B cell (primary cell): ENCODE measurements at regions of chr1 and their contacts with region 1.

Region 1: DNA sequence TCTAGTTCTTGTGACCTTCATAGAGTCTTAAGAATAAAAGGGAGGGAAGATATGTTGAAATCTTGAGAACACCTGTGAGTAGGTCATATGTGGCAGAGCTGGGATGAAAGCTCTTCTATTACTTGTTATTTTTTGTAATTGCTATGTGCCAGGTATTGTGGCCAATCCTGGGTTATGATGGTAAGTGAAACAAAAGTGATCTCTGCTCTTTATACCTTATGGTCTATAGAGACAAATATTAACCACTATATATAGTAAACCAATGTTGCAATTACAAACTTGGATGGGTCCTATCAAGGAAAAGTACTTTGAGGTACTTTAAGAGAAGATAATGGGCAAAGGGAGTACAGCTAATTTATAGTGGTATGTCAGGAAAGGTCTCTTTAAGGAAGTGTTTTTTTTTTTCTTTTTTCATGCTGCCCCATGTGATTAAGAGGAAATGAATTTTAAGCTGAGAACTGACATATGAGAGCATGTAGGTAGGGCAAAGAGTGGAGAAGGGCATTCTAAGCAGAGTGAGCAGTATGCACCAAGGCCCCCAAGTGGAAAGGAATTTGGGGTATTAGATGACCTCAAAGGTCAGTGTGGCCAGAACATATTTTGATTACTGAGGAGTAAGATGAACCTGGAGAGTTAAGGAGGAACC is 43.3 kb downstream of the POU2F1 start:
- DNase-seq: peak; percentile 56
- ATAC-seq: peak; percentile 67
- H3K4me3 ChIP-seq: no peak overlapping the region
- H3K4me3 Mint-ChIP-seq: no peak overlapping the region
- H3K27ac ChIP-seq: peak overlapping the region in 1 of 2 donors; percentile 29
- H3K27ac Mint-ChIP-seq: no peak overlapping the region
- H3K4me1 ChIP-seq: peaks cover 37% of the 10 kb centered on the region in 2 donors
- H3K4me1 Mint-ChIP-seq: peaks cover 25% of the 10 kb centered on the region
- H3K27me3 ChIP-seq: no peaks in the 10 kb centered on the region
- H3K27me3 Mint-ChIP-seq: no peaks in the 10 kb centered on the region
- CTCF ChIP-seq: no peak

Region 2: GRCh38 chr1:166489670-166490436 is 774.1 kb before region 1 on chr1:
- CTCF ChIA-PET with region 1: no interaction called
- POLR2A ChIA-PET with region 1: no interaction called
- intact Hi-C with region 1: no loop called
- DNase-seq: peak; percentile 76
- ATAC-seq: peak; percentile 81
- H3K4me3 ChIP-seq: peak overlapping the region; percentile 57 to 96 (median 83)
- H3K4me3 Mint-ChIP-seq: no peak overlapping the region
- H3K27ac ChIP-seq: peak overlapping the region; percentile 90 to 95
- H3K27ac Mint-ChIP-seq: no peak overlapping the region
- H3K4me1 ChIP-seq: peaks cover 14 to 19% of the 10 kb centered on the region in 2 donors
- H3K4me1 Mint-ChIP-seq: peaks cover 5% of the 10 kb centered on the region
- H3K27me3 ChIP-seq: no peaks in the 10 kb centered on the region
- H3K27me3 Mint-ChIP-seq: no peaks in the 10 kb centered on the region
- CTCF ChIP-seq: no peak

Region 3: GRCh38 chr1:166910396-166910994 is 353.4 kb before region 1 on chr1:
- CTCF ChIA-PET with region 1: interaction called, 11 read pairs
- POLR2A ChIA-PET with region 1: no interaction called
- intact Hi-C with region 1: no loop called
- DNase-seq: peak; percentile 87
- ATAC-seq: peak; percentile 97
- H3K4me3 ChIP-seq: no peak overlapping the region
- H3K4me3 Mint-ChIP-seq: no peak overlapping the region
- H3K27ac ChIP-seq: no peak overlapping the region
- H3K27ac Mint-ChIP-seq: no peak overlapping the region
- H3K4me1 ChIP-seq: peaks cover 6 to 8% of the 10 kb centered on the region in 2 donors
- H3K4me1 Mint-ChIP-seq: peaks cover 6% of the 10 kb centered on the region
- H3K27me3 ChIP-seq: no peaks in the 10 kb centered on the region
- H3K27me3 Mint-ChIP-seq: no peaks in the 10 kb centered on the region
- CTCF ChIP-seq: peak; percentile 96

Region 4: DNA sequence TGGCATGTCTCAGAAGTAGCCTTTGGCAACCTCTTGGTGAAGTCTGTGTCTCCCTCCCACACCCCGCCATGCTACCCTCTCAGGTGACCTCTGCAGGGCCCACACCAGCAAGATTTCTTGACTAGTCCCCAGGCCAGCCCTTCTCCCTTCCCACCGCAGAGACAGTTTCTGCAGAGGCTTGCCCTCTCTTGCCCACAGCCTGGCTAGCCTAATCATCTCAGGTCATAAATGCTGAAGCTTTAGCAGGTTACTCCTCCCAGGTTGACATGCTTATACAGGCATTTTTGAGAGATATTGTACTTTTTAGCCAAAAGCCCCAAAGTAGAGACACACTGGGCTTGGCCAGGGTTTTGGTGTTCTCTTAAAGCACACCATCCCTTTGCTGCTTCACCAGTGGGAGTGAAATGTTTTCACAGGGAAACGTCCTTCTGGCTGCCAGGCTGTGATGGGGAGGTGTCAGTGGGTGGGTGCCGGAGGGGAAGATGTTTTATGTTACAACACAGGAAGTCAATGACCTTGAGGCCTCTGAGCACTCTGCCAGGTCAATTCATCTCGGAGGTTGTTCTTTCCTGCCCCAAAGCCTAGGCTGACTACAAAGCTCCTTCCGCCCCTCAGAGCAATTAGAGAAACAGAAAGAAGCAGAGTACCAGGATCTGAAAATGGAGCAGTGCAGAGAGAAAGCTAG is 111.6 kb before region 1 on chr1:
- CTCF ChIA-PET with region 1: no interaction called
- POLR2A ChIA-PET with region 1: no interaction called
- intact Hi-C with region 1: no loop called
- DNase-seq: no peak
- ATAC-seq: no peak
- H3K4me3 ChIP-seq: no peak overlapping the region
- H3K4me3 Mint-ChIP-seq: no peak overlapping the region
- H3K27ac ChIP-seq: no peak overlapping the region
- H3K27ac Mint-ChIP-seq: no peak overlapping the region
- H3K4me1 ChIP-seq: no peaks in the 10 kb centered on the region
- H3K4me1 Mint-ChIP-seq: no peaks in the 10 kb centered on the region
- H3K27me3 ChIP-seq: peaks cover 0 to 14% (median 6%) of the 10 kb centered on the region in 4 experiments
- H3K27me3 Mint-ChIP-seq: peaks cover 31% of the 10 kb centered on the region
- CTCF ChIP-seq: no peak

Region 5: GRCh38 chr1:167196166-167196565 is 67.8 kb before region 1 on chr1:
- CTCF ChIA-PET with region 1: no interaction called
- POLR2A ChIA-PET with region 1: no interaction called
- intact Hi-C with region 1: no loop called
- DNase-seq: no peak
- ATAC-seq: no peak
- H3K4me3 ChIP-seq: no peak overlapping the region
- H3K4me3 Mint-ChIP-seq: no peak overlapping the region
- H3K27ac ChIP-seq: no peak overlapping the region
- H3K27ac Mint-ChIP-seq: no peak overlapping the region
- H3K4me1 ChIP-seq: no peaks in the 10 kb centered on the region
- H3K4me1 Mint-ChIP-seq: no peaks in the 10 kb centered on the region
- H3K27me3 ChIP-seq: no peaks in the 10 kb centered on the region
- H3K27me3 Mint-ChIP-seq: peaks cover 7% of the 10 kb centered on the region
- CTCF ChIP-seq: no peak

Region 6: GRCh38 chr1:167278497-167278896 is 14.6 kb after region 1 on chr1:
- CTCF ChIA-PET with region 1: interaction called, 33 read pairs
- POLR2A ChIA-PET with region 1: interaction called, 10 read pairs
- intact Hi-C with region 1: no loop called
- DNase-seq: no peak
- ATAC-seq: no peak
- H3K4me3 ChIP-seq: no peak overlapping the region
- H3K4me3 Mint-ChIP-seq: no peak overlapping the region
- H3K27ac ChIP-seq: no peak overlapping the region
- H3K27ac Mint-ChIP-seq: no peak overlapping the region
- H3K4me1 ChIP-seq: no peaks in the 10 kb centered on the region
- H3K4me1 Mint-ChIP-seq: peaks cover 34% of the 10 kb centered on the region
- H3K27me3 ChIP-seq: no peaks in the 10 kb centered on the region
- H3K27me3 Mint-ChIP-seq: no peaks in the 10 kb centered on the region
- CTCF ChIP-seq: no peak

Region 7: DNA sequence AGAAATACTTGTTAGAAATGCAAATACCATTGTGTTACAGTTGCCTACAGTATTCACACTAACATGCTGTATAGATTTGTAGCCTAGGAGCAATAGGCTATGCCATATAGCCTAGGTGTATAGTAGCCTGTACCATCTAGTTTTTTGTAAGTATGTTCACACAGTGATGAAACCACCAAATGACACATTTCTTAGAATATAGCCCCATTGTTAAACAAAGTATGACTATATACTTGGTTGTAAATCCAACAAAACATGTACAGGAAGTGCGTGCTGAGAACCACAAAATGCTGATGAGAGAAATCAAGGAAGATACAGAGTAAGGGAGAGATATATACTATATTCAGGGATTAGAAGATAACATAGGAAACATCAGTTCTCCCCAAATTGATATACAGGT is 48.9 kb after region 1 on chr1:
- CTCF ChIA-PET with region 1: no interaction called
- POLR2A ChIA-PET with region 1: no interaction called
- intact Hi-C with region 1: no loop called
- DNase-seq: no peak
- ATAC-seq: no peak
- H3K4me3 ChIP-seq: no peak overlapping the region
- H3K4me3 Mint-ChIP-seq: no peak overlapping the region
- H3K27ac ChIP-seq: no peak overlapping the region
- H3K27ac Mint-ChIP-seq: no peak overlapping the region
- H3K4me1 ChIP-seq: no peaks in the 10 kb centered on the region
- H3K4me1 Mint-ChIP-seq: peaks cover 13% of the 10 kb centered on the region
- H3K27me3 ChIP-seq: no peaks in the 10 kb centered on the region
- H3K27me3 Mint-ChIP-seq: no peaks in the 10 kb centered on the region
- CTCF ChIP-seq: no peak

Region 8: DNA sequence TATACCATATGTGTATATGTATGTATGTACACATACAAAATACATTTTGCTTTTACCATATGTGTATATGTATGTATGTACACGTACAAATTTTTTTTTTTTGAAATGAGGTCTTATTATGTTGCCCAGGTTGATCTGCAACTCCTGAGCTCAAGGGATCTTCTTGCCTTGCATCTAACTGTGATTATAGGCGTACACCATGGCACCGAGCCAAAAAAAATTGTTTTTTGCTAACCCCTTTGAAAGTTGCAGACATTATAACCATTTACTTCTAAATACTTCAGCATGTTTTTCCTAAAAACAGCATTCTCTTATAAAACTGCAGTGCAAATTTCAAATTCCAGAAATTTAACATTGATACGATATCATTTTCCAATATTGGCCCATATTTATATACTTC is 103.8 kb after region 1 on chr1:
- CTCF ChIA-PET with region 1: interaction called, 10 read pairs
- POLR2A ChIA-PET with region 1: no interaction called
- intact Hi-C with region 1: no loop called
- DNase-seq: no peak
- ATAC-seq: no peak
- H3K4me3 ChIP-seq: no peak overlapping the region
- H3K4me3 Mint-ChIP-seq: no peak overlapping the region
- H3K27ac ChIP-seq: no peak overlapping the region
- H3K27ac Mint-ChIP-seq: no peak overlapping the region
- H3K4me1 ChIP-seq: no peaks in the 10 kb centered on the region
- H3K4me1 Mint-ChIP-seq: peaks cover 2% of the 10 kb centered on the region
- H3K27me3 ChIP-seq: no peaks in the 10 kb centered on the region
- H3K27me3 Mint-ChIP-seq: no peaks in the 10 kb centered on the region
- CTCF ChIP-seq: no peak

Region 9: GRCh38 chr1:167409183-167409582 is 145.2 kb after region 1 on chr1:
- CTCF ChIA-PET with region 1: interaction called, 22 read pairs
- POLR2A ChIA-PET with region 1: interaction called, 3 read pairs
- intact Hi-C with region 1: no loop called
- DNase-seq: peak; percentile 19
- ATAC-seq: no peak
- H3K4me3 ChIP-seq: no peak overlapping the region
- H3K4me3 Mint-ChIP-seq: no peak overlapping the region
- H3K27ac ChIP-seq: no peak overlapping the region
- H3K27ac Mint-ChIP-seq: no peak overlapping the region
- H3K4me1 ChIP-seq: no peaks in the 10 kb centered on the region
- H3K4me1 Mint-ChIP-seq: peaks cover 6% of the 10 kb centered on the region
- H3K27me3 ChIP-seq: no peaks in the 10 kb centered on the region
- H3K27me3 Mint-ChIP-seq: no peaks in the 10 kb centered on the region
- CTCF ChIP-seq: peak; percentile 14

Region 10: DNA sequence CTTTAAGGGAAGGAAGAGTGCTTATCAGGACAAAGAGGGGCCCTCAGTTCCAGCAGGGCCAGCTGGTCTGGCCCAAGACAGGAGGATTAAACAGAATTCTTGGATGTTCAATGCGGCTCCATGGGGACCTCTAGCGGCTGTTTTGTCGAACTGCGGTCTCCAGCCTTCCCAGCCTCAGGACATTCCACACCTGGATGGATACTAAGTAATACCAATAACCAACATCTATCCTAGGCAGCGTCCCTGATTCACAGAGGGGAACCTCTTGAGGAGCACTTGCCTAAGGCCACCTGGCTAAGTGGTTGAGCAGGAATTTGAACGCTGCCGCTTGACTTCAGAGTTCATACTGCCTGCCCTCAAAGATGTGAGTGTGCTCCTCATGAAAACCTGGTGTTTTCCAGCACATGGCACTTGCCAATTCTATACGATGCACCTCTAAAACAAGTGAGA is 269.9 kb after region 1 on chr1:
- CTCF ChIA-PET with region 1: interaction called, 66 read pairs
- POLR2A ChIA-PET with region 1: no interaction called
- intact Hi-C with region 1: loop called (anchors 1 kb)
- DNase-seq: peak; percentile 73
- ATAC-seq: peak; percentile 68
- H3K4me3 ChIP-seq: no peak overlapping the region
- H3K4me3 Mint-ChIP-seq: no peak overlapping the region
- H3K27ac ChIP-seq: no peak overlapping the region
- H3K27ac Mint-ChIP-seq: no peak overlapping the region
- H3K4me1 ChIP-seq: no peaks in the 10 kb centered on the region
- H3K4me1 Mint-ChIP-seq: peaks cover 5% of the 10 kb centered on the region
- H3K27me3 ChIP-seq: peaks cover 0 to 4% (median 0%) of the 10 kb centered on the region in 4 experiments
- H3K27me3 Mint-ChIP-seq: no peaks in the 10 kb centered on the region
- CTCF ChIP-seq: peak; percentile 94